Activated CD8-positive, alpha-beta T cell treated with anti-CD3 and anti-CD28 coated beads, Interleukin-2, amount 10 ng/mL, durations not matched to agents 7 days and 5 days (primary cell): ENCODE measurements at regions of chr17 and their contacts with region 1.

Region 1: GRCh38 chr17:82105882-82106687 is 8.0 kb upstream of the FASN start:
- DNase-seq: peak; percentile 77
- ATAC-seq: peak; percentile 96
- H3K4me3 Mint-ChIP-seq: peak overlapping the region; percentile 86
- H3K27ac Mint-ChIP-seq: peak overlapping the region; percentile 96
- H3K4me1 Mint-ChIP-seq: peaks cover 45% of the 10 kb centered on the region
- H3K27me3 Mint-ChIP-seq: no peaks in the 10 kb centered on the region

Region 2: DNA sequence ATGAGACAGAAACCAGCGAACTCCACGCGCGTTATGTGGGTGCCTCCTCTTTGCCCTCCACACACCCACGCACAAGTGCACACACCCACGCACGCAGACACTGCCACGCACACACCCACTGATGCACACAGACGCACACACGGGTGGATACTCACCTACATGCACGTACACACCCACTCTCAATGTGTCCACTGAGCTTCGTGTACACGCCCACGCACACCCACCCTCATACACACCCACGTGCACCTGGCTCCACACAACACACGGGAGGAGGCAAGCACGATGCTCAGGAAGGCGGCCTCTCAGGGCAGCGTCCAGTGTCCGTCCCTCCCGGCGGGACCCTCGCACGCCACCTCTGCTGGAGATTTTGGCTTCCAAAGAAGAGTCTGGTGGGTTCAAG is 58.7 kb before region 1 on chr17:
- CTCF ChIA-PET with region 1: no interaction called
- POLR2A ChIA-PET with region 1: no interaction called
- DNase-seq: no peak
- ATAC-seq: no peak
- H3K4me3 Mint-ChIP-seq: no peak overlapping the region
- H3K27ac Mint-ChIP-seq: no peak overlapping the region
- H3K4me1 Mint-ChIP-seq: peaks cover 9% of the 10 kb centered on the region
- H3K27me3 Mint-ChIP-seq: no peaks in the 10 kb centered on the region

Region 3: GRCh38 chr17:82120148-82120547 is 14.1 kb after region 1 on chr17:
- CTCF ChIA-PET with region 1: interaction called, 19 read pairs
- POLR2A ChIA-PET with region 1: no interaction called
- DNase-seq: no peak
- ATAC-seq: peak; percentile 57
- H3K4me3 Mint-ChIP-seq: no peak overlapping the region
- H3K27ac Mint-ChIP-seq: peak overlapping the region; percentile 55
- H3K4me1 Mint-ChIP-seq: peaks cover 47% of the 10 kb centered on the region
- H3K27me3 Mint-ChIP-seq: no peaks in the 10 kb centered on the region

Region 4: GRCh38 chr17:82126556-82127314 is 20.6 kb after region 1 on chr17:
- CTCF ChIA-PET with region 1: interaction called, 19 read pairs
- POLR2A ChIA-PET with region 1: interaction called, 7 read pairs
- DNase-seq: peak; percentile 92
- ATAC-seq: peak; percentile 93
- H3K4me3 Mint-ChIP-seq: peak overlapping the region; percentile 70
- H3K27ac Mint-ChIP-seq: peak overlapping the region; percentile 98
- H3K4me1 Mint-ChIP-seq: peaks cover 59% of the 10 kb centered on the region
- H3K27me3 Mint-ChIP-seq: no peaks in the 10 kb centered on the region

Region 5: GRCh38 chr17:82257473-82257872 is 151.4 kb after region 1 on chr17:
- CTCF ChIA-PET with region 1: no interaction called
- POLR2A ChIA-PET with region 1: no interaction called
- DNase-seq: peak; percentile 55
- ATAC-seq: peak; percentile 91
- H3K4me3 Mint-ChIP-seq: no peak overlapping the region
- H3K27ac Mint-ChIP-seq: peak overlapping the region; percentile 71
- H3K4me1 Mint-ChIP-seq: peaks cover 10% of the 10 kb centered on the region
- H3K27me3 Mint-ChIP-seq: no peaks in the 10 kb centered on the region

Region 6: DNA sequence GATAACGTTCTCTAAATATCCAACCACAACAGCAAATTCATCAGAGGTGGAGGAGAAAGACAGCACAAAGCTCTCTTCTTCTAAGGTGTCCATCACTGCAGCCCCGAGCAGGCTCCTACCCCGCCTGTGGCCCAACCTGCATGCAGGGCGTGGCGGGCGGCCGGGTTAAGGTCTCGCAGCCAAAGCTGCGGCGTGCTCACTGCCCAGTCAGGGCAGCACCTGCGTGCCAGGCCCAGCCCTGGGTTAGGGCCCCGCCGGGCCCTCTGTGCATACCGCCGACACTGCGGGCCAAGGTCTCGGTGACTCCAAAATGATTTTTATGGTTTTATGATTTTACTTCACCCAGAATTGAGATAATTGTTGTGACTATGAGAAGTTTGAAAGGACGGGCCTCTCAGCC is 471.2 kb after region 1 on chr17:
- CTCF ChIA-PET with region 1: no interaction called
- POLR2A ChIA-PET with region 1: no interaction called
- DNase-seq: no peak
- ATAC-seq: no peak
- H3K4me3 Mint-ChIP-seq: no peak overlapping the region
- H3K27ac Mint-ChIP-seq: no peak overlapping the region
- H3K4me1 Mint-ChIP-seq: no peaks in the 10 kb centered on the region
- H3K27me3 Mint-ChIP-seq: no peaks in the 10 kb centered on the region